IMR-90 (cell line): ENCODE measurements at regions of chr21 and their contacts with region 1.

Region 1: DNA sequence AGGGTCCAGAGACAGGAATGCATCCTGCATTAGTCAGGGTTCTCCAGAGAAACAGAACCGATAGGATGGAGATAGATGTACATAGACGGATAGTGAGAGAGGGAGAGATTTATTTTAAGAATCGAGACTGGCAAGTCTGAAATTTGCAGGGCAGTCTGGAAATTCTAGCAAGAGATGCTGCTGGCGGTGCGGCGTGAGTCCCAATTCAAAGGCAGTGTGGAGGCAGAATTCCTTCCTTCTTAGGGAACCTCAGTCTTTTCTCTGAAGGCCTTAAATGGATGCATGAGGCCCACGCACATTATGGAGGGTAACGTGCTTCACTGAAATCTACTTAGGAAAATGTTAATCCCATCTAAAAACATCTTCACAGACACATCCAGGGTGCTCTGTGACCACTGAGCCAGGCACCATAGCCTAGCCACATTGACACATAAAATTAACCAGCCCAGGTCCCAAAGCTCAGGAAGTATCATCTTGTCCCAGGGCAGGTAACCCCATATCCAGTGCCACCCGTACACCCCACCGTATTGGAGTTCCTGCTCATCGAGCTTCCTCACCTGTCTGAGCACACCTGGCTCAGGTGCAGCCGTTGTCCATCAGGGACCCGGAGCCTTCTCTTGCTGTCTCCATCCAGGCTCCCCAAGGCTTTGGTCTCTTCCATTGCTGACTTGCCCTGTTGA is 9.7 kb upstream of the PKNOX1 start:
- DNase-seq: no peak
- ATAC-seq: no peak
- H3K4me3 ChIP-seq: no peak overlapping the region
- H3K27ac ChIP-seq: no peak overlapping the region
- H3K4me1 ChIP-seq: no peaks in the 10 kb centered on the region
- H3K27me3 ChIP-seq: no peaks in the 10 kb centered on the region
- CTCF ChIP-seq: no peak
- POLR2A ChIP-seq: no peak
- RAD21 ChIP-seq: no peak

Region 2: DNA sequence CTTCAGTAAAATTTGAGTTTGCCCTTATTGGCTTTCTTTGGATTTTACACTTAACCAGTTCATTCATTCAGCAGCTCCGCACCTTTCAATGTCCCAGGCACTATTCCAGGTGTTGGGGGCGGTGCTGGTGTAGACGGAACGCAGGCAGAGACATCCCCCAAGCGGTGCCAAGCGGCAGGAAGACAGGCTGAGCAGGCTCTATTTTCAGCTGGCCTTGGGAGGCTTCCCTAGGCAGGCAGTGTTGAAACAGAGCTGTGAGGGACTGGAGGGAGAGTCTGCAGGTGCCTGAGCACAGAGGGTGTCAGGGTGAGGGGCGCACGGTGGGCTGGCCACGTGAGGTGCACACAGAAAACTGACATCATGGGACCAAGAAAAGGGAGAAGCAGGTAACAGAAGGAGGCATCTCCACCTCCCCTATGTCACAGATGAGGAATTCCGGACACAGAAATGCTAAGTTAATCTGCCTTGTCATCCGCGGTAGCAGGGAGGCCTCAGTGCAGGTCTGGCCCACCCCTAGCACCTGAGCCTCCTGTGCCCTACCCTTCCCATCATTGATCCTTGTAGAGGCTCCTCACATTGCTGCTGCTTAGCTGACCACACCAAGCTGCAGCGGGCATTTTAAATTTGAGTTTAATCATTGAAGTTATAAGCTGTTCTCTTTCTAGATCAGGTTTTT is 410.3 kb before region 1 on chr21:
- CTCF ChIA-PET with region 1: no interaction called
- POLR2A ChIA-PET with region 1: no interaction called
- dilution Hi-C with region 1: no loop called
- in situ Hi-C with region 1: no loop called
- intact Hi-C with region 1: no loop called
- DNase-seq: no peak
- ATAC-seq: no peak
- H3K4me3 ChIP-seq: no peak overlapping the region
- H3K27ac ChIP-seq: no peak overlapping the region
- H3K4me1 ChIP-seq: no peaks in the 10 kb centered on the region
- H3K27me3 ChIP-seq: peaks cover 7% of the 10 kb centered on the region; the same call in 1 of the 2 replicates
- CTCF ChIP-seq: no peak
- POLR2A ChIP-seq: no peak
- RAD21 ChIP-seq: no peak

Region 3: GRCh38 chr21:42918291-42918690 is 46.4 kb before region 1 on chr21:
- CTCF ChIA-PET with region 1: no interaction called
- POLR2A ChIA-PET with region 1: no interaction called
- dilution Hi-C with region 1: no loop called
- in situ Hi-C with region 1: loop called (anchors 5 kb)
- intact Hi-C with region 1: no loop called
- DNase-seq: no peak
- ATAC-seq: no peak
- H3K4me3 ChIP-seq: no peak overlapping the region
- H3K27ac ChIP-seq: no peak overlapping the region
- H3K4me1 ChIP-seq: peaks cover 2% of the 10 kb centered on the region; the same call in 1 of the 2 replicates
- H3K27me3 ChIP-seq: no peaks in the 10 kb centered on the region
- CTCF ChIP-seq: no peak
- POLR2A ChIP-seq: no peak
- RAD21 ChIP-seq: no peak